CD4-positive, alpha-beta T cell (primary cell): ENCODE measurements at regions of chr14 and their contacts with region 1.

Region 1: DNA sequence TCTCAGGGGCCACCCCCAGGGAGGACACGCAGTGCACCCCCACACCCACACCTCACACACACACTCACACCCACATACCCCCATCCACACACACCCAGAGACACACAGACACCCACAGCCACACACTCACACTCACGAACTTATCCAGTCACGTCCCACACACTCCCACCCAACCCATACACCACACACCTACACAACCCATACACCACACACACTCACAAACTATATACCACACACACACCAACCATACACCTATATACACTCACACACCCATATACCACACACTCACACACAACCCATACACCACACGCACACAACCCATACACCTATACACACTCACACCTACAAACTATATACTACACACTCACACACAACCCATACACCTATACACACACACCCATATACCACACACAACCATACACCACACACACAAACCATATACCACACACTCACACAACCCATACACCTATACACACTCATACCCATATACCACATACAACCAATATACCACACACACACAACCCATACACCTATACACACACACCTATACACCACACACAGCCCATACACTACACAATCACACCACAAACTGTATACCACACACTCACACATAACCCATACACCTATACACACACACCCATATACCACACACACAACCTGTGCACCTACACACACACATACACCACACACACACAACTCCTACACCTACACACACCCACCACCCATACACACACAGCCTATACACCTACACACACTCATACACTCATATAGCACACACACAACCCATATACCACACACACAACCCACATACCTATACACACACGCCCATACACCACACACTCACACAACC is 42.7 kb downstream of the TMEM121 start:
- DNase-seq: no peak
- ATAC-seq: no peak
- H3K4me3 ChIP-seq: no peak overlapping the region
- H3K4me3 Mint-ChIP-seq: no peak overlapping the region
- H3K27ac ChIP-seq: no peak overlapping the region
- H3K27ac Mint-ChIP-seq: no peak overlapping the region
- H3K4me1 ChIP-seq: no peaks in the 10 kb centered on the region
- H3K4me1 Mint-ChIP-seq: no peaks in the 10 kb centered on the region
- H3K27me3 ChIP-seq: no peaks in the 10 kb centered on the region
- H3K27me3 Mint-ChIP-seq: no peaks in the 10 kb centered on the region
- CTCF ChIP-seq: no peak

Region 2: DNA sequence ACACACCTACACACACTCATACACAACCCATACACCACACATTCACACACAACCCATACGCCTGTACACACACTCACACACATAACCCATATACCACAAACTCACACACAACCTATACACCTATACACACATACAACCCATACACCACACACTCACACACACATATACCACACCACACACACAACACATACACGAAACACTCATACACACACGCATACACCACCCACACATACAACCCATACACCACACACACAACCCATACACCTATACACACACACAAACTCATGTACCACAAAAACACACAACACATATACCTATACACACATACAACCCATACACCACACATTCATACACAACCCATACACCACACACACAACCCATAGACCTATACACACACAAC is 121.6 kb after region 1 on chr14:
- CTCF ChIA-PET with region 1: no interaction called
- POLR2A ChIA-PET with region 1: no interaction called
- intact Hi-C with region 1: loop called in 1 of 2 experiments (anchors 2 kb)
- DNase-seq: no peak
- ATAC-seq: no peak
- H3K4me3 ChIP-seq: no peak overlapping the region
- H3K4me3 Mint-ChIP-seq: no peak overlapping the region
- H3K27ac ChIP-seq: no peak overlapping the region
- H3K27ac Mint-ChIP-seq: no peak overlapping the region
- H3K4me1 ChIP-seq: no peaks in the 10 kb centered on the region
- H3K4me1 Mint-ChIP-seq: no peaks in the 10 kb centered on the region
- H3K27me3 ChIP-seq: no peaks in the 10 kb centered on the region
- H3K27me3 Mint-ChIP-seq: no peaks in the 10 kb centered on the region
- CTCF ChIP-seq: no peak